Gastrocnemius medialis (tissue), 4 donors: ENCODE measurements at regions of chr13 and their contacts with region 1.

Region 1: DNA sequence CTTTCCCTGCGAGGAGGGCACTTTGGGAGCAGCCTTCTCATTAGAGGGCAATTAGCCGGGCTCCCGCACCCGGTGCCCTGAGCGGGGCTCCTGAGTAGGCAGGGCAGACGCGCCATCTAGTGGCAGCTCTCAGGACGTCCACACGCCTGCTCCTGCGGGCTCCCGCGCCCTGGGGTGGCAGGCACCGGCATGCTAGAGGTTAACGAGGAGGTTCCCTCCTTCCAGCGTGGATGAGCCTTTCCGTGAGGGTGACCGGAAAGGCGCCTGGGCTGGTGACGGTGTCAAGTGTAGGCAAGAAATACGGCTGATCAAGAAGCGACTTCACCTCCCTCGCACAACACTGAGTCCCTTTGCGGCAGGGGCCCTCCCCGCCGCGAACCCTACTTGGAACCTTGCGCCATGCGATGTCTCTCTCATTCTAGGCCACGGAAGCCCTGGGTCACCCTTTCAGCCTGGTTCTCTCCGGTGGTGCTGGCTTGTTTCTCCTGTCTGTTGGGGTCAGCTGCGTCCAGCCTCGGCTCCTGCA is 67.7 kb downstream of the ALOX5AP start:
- DNase-seq: peak; percentile 64 to 78
- ATAC-seq: peak; percentile 85 to 87
- H3K4me3 ChIP-seq: peak overlapping the region; percentile 49 to 72 (median 59)
- H3K27ac ChIP-seq: peak overlapping the region; percentile 25 to 79 (median 62)
- H3K4me1 ChIP-seq: peaks cover 0 to 16% of the 10 kb centered on the region in 2 donors
- H3K27me3 ChIP-seq: no peaks in the 10 kb centered on the region
- CTCF ChIP-seq: peak; percentile 88 to 96 (median 95)
- POLR2A ChIP-seq: no peak

Region 2: GRCh38 chr13:30257468-30258099 is 545.4 kb before region 1 on chr13:
- in situ Hi-C with region 1: no loop called
- intact Hi-C with region 1: loop called (anchors 10 kb)
- DNase-seq: no peak
- ATAC-seq: no peak
- H3K4me3 ChIP-seq: no peak overlapping the region
- H3K27ac ChIP-seq: no peak overlapping the region
- H3K4me1 ChIP-seq: no peaks in the 10 kb centered on the region
- H3K27me3 ChIP-seq: no peaks in the 10 kb centered on the region
- CTCF ChIP-seq: no peak
- POLR2A ChIP-seq: no peak

Region 3: GRCh38 chr13:30422054-30422839 is 380.8 kb before region 1 on chr13 and contains the start of gene UBE2L5:
- in situ Hi-C with region 1: no loop called
- intact Hi-C with region 1: loop called (anchors 5 kb)
- DNase-seq: peak; percentile 65 to 76
- ATAC-seq: peak; percentile 64 to 69
- H3K4me3 ChIP-seq: peak within 1 kb of the TSS; percentile 64 to 95 (median 77)
- H3K27ac ChIP-seq: peak within 1 kb of the TSS; percentile 95 to 99 (median 98)
- H3K4me1 ChIP-seq: peaks cover 9 to 10% of the 10 kb centered on the region in 2 donors
- H3K27me3 ChIP-seq: no peaks in the 10 kb centered on the region
- CTCF ChIP-seq: no peak
- POLR2A ChIP-seq: peak; percentile 70 to 77
- total RNA-seq, gene UBE2L5: not detected

Region 4: GRCh38 chr13:30673669-30674521 is 129.1 kb before region 1 on chr13:
- in situ Hi-C with region 1: no loop called
- intact Hi-C with region 1: loop called (anchors 2 kb)
- DNase-seq: peak; percentile 61 to 83
- ATAC-seq: peak; percentile 79 to 86
- H3K4me3 ChIP-seq: peak overlapping the region; percentile 53 to 63 (median 56)
- H3K27ac ChIP-seq: peak overlapping the region; percentile 72 to 79 (median 74)
- H3K4me1 ChIP-seq: peaks cover 4 to 5% of the 10 kb centered on the region in 2 donors
- H3K27me3 ChIP-seq: no peaks in the 10 kb centered on the region
- CTCF ChIP-seq: peak; percentile 62 to 80 (median 70)
- POLR2A ChIP-seq: no peak

Region 5: DNA sequence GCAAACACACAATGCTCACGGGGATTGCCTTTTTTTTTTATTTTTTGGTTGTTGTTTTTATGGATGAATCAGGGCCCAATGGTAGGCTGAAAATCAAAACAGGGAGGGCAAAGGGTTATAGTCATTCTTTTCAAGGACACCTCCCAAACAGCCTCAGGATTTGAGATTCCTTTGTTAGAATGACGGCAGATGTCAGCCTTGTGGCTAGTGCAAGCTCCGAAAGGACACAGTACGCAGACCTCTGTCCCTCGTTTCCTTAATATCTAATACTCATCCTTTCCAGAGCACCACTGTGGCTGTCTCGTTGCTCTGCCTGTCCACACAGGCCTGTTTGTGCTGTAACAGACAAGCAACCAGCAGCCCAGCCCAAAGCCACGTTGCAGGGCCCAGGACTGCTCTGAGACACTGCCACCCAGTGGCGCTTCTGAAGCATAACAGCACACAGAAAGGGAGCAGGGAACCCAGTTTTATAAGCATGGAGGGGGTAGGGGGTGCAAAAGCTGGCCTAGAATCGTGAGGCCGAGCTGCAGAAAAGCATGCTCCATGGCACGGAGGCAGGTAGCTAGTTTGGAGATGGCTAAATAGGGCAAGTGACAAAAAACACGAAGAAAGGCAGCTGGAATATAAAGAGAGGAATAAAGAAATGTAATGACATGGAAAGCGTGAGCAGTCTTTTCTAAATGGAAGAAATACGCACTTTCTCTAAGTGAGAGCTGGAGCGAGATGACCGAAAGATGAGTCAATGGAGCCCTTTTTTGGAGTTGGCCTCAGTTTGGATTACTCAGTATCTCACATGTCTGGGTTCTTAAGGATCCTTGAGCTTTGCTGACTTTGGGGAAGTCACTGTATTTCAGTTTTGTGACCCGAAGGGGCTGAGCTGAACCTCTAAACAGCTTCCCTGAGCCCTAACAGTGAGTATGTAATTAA is 62.4 kb after region 1 on chr13:
- in situ Hi-C with region 1: no loop called
- intact Hi-C with region 1: loop called (anchors 5 kb)
- DNase-seq: peak; percentile 68 to 71
- ATAC-seq: peak; percentile 69
- H3K4me3 ChIP-seq: no peak overlapping the region
- H3K27ac ChIP-seq: peak overlapping the region; percentile 34 to 49 (median 43)
- H3K4me1 ChIP-seq: peaks cover 6 to 23% of the 10 kb centered on the region in 2 donors
- H3K27me3 ChIP-seq: no peaks in the 10 kb centered on the region
- CTCF ChIP-seq: peak; percentile 67 to 90 (median 81)
- POLR2A ChIP-seq: peak in 1 of 2 donors; percentile 6

Region 6: DNA sequence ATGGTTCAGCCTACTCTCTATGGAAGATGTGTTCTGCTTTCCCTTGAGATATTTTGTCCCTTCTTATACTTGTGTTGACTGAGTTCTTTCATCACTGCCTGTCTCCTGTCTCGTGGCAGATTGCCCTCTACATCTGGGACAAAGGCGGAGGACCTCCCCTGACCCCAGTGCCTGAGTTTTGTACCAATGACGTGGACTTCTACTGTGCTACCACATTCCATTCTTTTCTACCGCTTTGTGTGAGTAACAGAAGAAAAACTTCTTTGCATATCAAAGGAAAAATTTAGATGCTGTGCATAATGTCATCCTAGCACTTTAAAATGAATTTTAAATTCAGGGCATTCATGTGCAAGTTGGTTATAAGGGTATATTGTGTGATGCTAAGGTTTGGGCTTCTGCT is 471.4 kb after region 1 on chr13:
- in situ Hi-C with region 1: no loop called
- intact Hi-C with region 1: no loop called
- DNase-seq: no peak
- ATAC-seq: no peak
- H3K4me3 ChIP-seq: no peak overlapping the region
- H3K27ac ChIP-seq: no peak overlapping the region
- H3K4me1 ChIP-seq: no peaks in the 10 kb centered on the region
- H3K27me3 ChIP-seq: no peaks in the 10 kb centered on the region
- CTCF ChIP-seq: no peak
- POLR2A ChIP-seq: no peak